PC-9 (cell line): ENCODE measurements at regions of chr3 and their contacts with region 1.

Region 1: GRCh38 chr3:107271787-107272387 is 105.4 kb upstream of the CCDC54 start:
- DNase-seq: peak in 1 of 2 experiments; percentile 65
- H3K4me3 ChIP-seq: no peak overlapping the region
- H3K27ac ChIP-seq: no peak overlapping the region
- H3K4me1 ChIP-seq: no peaks in the 10 kb centered on the region
- H3K27me3 ChIP-seq: no peaks in the 10 kb centered on the region
- CTCF ChIP-seq: peak; percentile 96

Region 2: DNA sequence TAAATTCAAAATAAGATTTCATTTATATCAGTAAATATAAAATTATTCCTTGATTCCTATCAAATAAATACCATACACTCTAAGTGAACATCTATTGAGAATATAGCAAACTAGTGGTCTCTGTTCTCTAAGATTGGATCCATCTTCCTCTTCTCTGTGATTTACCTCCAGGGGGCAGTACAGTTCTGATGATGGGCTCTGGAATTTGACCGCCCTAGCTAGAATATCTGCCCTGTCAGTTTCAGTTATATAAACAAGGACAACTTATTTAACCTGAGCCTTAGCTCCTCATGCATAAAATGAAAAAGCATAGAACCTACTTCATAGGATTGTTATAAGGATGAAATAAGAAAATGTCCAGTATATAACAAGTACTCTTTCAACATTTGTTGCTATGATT is 65.7 kb before region 1 on chr3:
- CTCF ChIA-PET with region 1: interaction called, 6 read pairs
- POLR2A ChIA-PET with region 1: no interaction called
- intact Hi-C with region 1: loop called (anchors 2 kb)
- DNase-seq: peak; percentile 26 to 57
- H3K4me3 ChIP-seq: no peak overlapping the region
- H3K27ac ChIP-seq: no peak overlapping the region
- H3K4me1 ChIP-seq: peaks cover 32% of the 10 kb centered on the region
- H3K27me3 ChIP-seq: no peaks in the 10 kb centered on the region
- CTCF ChIP-seq: peak; percentile 90

Region 3: GRCh38 chr3:107308716-107309115 is 36.8 kb after region 1 on chr3:
- CTCF ChIA-PET with region 1: no interaction called
- POLR2A ChIA-PET with region 1: no interaction called
- intact Hi-C with region 1: no loop called
- DNase-seq: no peak
- H3K4me3 ChIP-seq: no peak overlapping the region
- H3K27ac ChIP-seq: no peak overlapping the region
- H3K4me1 ChIP-seq: no peaks in the 10 kb centered on the region
- H3K27me3 ChIP-seq: no peaks in the 10 kb centered on the region
- CTCF ChIP-seq: no peak

Region 4: GRCh38 chr3:107421170-107421792 is 149.4 kb after region 1 on chr3:
- CTCF ChIA-PET with region 1: interaction called, 23 read pairs
- POLR2A ChIA-PET with region 1: no interaction called
- intact Hi-C with region 1: loop called (anchors 1 kb)
- DNase-seq: peak; percentile 30 to 76
- H3K4me3 ChIP-seq: peak overlapping the region; percentile 43; the same call in 1 of the 2 replicates
- H3K27ac ChIP-seq: no peak overlapping the region
- H3K4me1 ChIP-seq: peaks cover 11% of the 10 kb centered on the region; the same call in 1 of the 2 replicates
- H3K27me3 ChIP-seq: no peaks in the 10 kb centered on the region
- CTCF ChIP-seq: peak; percentile 93

Region 5: GRCh38 chr3:107522510-107523288 is 250.8 kb after region 1 on chr3 and contains the start of gene BBX:
- CTCF ChIA-PET with region 1: interaction called, 3 read pairs
- POLR2A ChIA-PET with region 1: interaction called, 4 read pairs
- intact Hi-C with region 1: loop called (anchors 5 kb)
- DNase-seq: peak; percentile 94 to 98
- H3K4me3 ChIP-seq: peak within 1 kb of the TSS; percentile 95
- H3K27ac ChIP-seq: peak within 1 kb of the TSS; percentile 58
- H3K4me1 ChIP-seq: peaks cover 23% of the 10 kb centered on the region
- H3K27me3 ChIP-seq: no peaks in the 10 kb centered on the region
- CTCF ChIP-seq: no peak
- total RNA-seq, gene BBX: 91.7 and 92.5 TPM in 2 replicates

Region 6: DNA sequence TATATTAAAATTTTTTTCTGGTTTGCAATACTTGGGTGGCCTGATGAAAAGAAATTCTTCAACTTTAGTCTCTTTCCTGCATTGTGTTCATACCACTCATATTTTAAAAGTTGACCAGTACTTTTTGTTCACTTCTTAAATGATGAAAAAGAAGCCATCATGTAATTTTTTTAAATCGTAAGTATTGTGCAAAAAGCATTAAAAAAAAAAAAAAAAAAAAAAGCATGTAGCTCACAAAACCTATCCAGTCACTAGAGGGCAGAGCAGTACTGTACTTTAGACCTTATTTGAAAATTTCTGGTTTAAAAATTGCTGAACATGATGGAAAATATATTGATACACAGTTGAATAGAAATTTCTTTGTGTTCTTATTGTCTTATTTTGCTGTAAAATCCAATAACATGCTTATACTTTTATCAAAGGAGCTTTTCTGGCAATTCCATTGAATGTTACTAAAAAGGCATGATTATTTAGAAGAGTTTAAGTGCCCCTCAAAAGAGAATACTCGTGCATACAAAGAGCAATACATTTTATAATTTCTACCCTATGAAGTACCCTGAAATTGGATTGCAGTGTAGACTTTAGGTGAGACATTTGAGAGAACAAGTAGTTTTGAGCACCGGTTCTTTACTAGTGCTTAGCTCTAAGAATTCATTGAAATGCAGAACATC is 388.6 kb after region 1 on chr3:
- CTCF ChIA-PET with region 1: no interaction called
- POLR2A ChIA-PET with region 1: no interaction called
- intact Hi-C with region 1: loop called (anchors 10 kb)
- DNase-seq: peak in 1 of 2 experiments; percentile 53
- H3K4me3 ChIP-seq: no peak overlapping the region
- H3K27ac ChIP-seq: no peak overlapping the region
- H3K4me1 ChIP-seq: no peaks in the 10 kb centered on the region
- H3K27me3 ChIP-seq: no peaks in the 10 kb centered on the region
- CTCF ChIP-seq: peak; percentile 92

Region 7: GRCh38 chr3:107884719-107885460 is 613.0 kb after region 1 on chr3:
- CTCF ChIA-PET with region 1: interaction called, 12 read pairs
- POLR2A ChIA-PET with region 1: no interaction called
- intact Hi-C with region 1: no loop called
- DNase-seq: no peak
- H3K4me3 ChIP-seq: no peak overlapping the region
- H3K27ac ChIP-seq: no peak overlapping the region
- H3K4me1 ChIP-seq: no peaks in the 10 kb centered on the region
- H3K27me3 ChIP-seq: no peaks in the 10 kb centered on the region
- CTCF ChIP-seq: peak; percentile 37; the same call in 1 of the 2 replicates